ENCODE measurements at regions of chr15 and their contacts with region 1.

Region 1: GRCh38 chr15:49155110-49155833 is at the start of gene COPS2:
- DNase-seq: peak; percentile 95 to 98 (median 96)
- H3K4me3 ChIP-seq: peak within 1 kb of the TSS; percentile 92 to 97 (median 95)
- H3K4me3 Mint-ChIP-seq: peak within 1 kb of the TSS; percentile 96 to 97
- H3K27ac ChIP-seq: peak within 1 kb of the TSS; percentile 86 to 89
- H3K27ac Mint-ChIP-seq: peak within 1 kb of the TSS; percentile 92 to 99 (median 98)
- H3K4me1 ChIP-seq: peaks cover 14 to 33% of the 10 kb centered on the region in 2 donors
- H3K4me1 Mint-ChIP-seq: peaks cover 38% of the 10 kb centered on the region
- H3K27me3 ChIP-seq: no peaks in the 10 kb centered on the region
- H3K27me3 Mint-ChIP-seq: no peaks in the 10 kb centered on the region
- CTCF ChIP-seq: no peak
- polyA plus RNA-seq, gene COPS2: 22.2 to 36.1 (median 32.4) TPM

Region 2: GRCh38 chr15:49046220-49047102 is 108.8 kb before region 1 on chr15 and contains the start of gene SECISBP2L:
- intact Hi-C with region 1: loop called (anchors 10 kb)
- DNase-seq: peak; percentile 80 to 88 (median 88)
- H3K4me3 ChIP-seq: peak within 1 kb of the TSS; percentile 90 to 93 (median 90)
- H3K4me3 Mint-ChIP-seq: peak within 1 kb of the TSS; percentile 94 to 97
- H3K27ac ChIP-seq: peak within 1 kb of the TSS; percentile 43 to 80
- H3K27ac Mint-ChIP-seq: peak within 1 kb of the TSS; percentile 81 to 95 (median 92)
- H3K4me1 ChIP-seq: peaks cover 16 to 28% of the 10 kb centered on the region in 2 donors
- H3K4me1 Mint-ChIP-seq: peaks cover 25% of the 10 kb centered on the region
- H3K27me3 ChIP-seq: no peaks in the 10 kb centered on the region
- H3K27me3 Mint-ChIP-seq: peaks cover 0 to 4% (median 1%) of the 10 kb centered on the region in 3 donors
- CTCF ChIP-seq: no peak
- polyA plus RNA-seq, gene SECISBP2L: 5.0 to 19.8 (median 9.5) TPM

Region 3: GRCh38 chr15:49286649-49287404 is 131.6 kb after region 1 on chr15:
- intact Hi-C with region 1: no loop called
- DNase-seq: no peak
- H3K4me3 ChIP-seq: no peak overlapping the region
- H3K4me3 Mint-ChIP-seq: no peak overlapping the region
- H3K27ac ChIP-seq: no peak overlapping the region
- H3K27ac Mint-ChIP-seq: no peak overlapping the region
- H3K4me1 ChIP-seq: no peaks in the 10 kb centered on the region
- H3K4me1 Mint-ChIP-seq: no peaks in the 10 kb centered on the region
- H3K27me3 ChIP-seq: no peaks in the 10 kb centered on the region
- H3K27me3 Mint-ChIP-seq: peaks cover 0 to 1% (median 0%) of the 10 kb centered on the region in 3 donors
- CTCF ChIP-seq: no peak

Region 4: GRCh38 chr15:49620658-49621368 is 465.5 kb after region 1 on chr15 and contains the starts of genes DTWD1 and FAM227B:
- intact Hi-C with region 1: loop called in 1 of 2 experiments (anchors 10 kb)
- DNase-seq: peak; percentile 96 to 98 (median 97)
- H3K4me3 ChIP-seq: peak within 1 kb of the TSS; percentile 80 to 93 (median 91)
- H3K4me3 Mint-ChIP-seq: peak within 1 kb of the TSS; percentile 92 to 95
- H3K27ac ChIP-seq: peak within 1 kb of the TSS; percentile 90 to 93
- H3K27ac Mint-ChIP-seq: peak within 1 kb of the TSS; percentile 93 to 99 (median 97)
- H3K4me1 ChIP-seq: peaks cover 17 to 31% of the 10 kb centered on the region in 2 donors
- H3K4me1 Mint-ChIP-seq: peaks cover 31% of the 10 kb centered on the region
- H3K27me3 ChIP-seq: no peaks in the 10 kb centered on the region
- H3K27me3 Mint-ChIP-seq: no peaks in the 10 kb centered on the region
- CTCF ChIP-seq: no peak
- polyA plus RNA-seq, gene DTWD1: 8.3 to 11.8 (median 10.2) TPM
- polyA plus RNA-seq, gene FAM227B: 0.28 to 0.72 (median 0.49) TPM